Uterus (tissue), 4 donors: ENCODE measurements at regions of chr4 and their contacts with region 1.

Region 1: GRCh38 chr4:32624943-32625603 is 1904.9 kb downstream of the PCDH7 start:
- DNase-seq: no peak
- H3K4me3 ChIP-seq: no peak overlapping the region
- H3K27ac ChIP-seq: no peak overlapping the region
- H3K4me1 ChIP-seq: no peaks in the 10 kb centered on the region
- H3K27me3 ChIP-seq: no peaks in the 10 kb centered on the region
- CTCF ChIP-seq: no peak
- POLR2A ChIP-seq: no peak

Region 2: DNA sequence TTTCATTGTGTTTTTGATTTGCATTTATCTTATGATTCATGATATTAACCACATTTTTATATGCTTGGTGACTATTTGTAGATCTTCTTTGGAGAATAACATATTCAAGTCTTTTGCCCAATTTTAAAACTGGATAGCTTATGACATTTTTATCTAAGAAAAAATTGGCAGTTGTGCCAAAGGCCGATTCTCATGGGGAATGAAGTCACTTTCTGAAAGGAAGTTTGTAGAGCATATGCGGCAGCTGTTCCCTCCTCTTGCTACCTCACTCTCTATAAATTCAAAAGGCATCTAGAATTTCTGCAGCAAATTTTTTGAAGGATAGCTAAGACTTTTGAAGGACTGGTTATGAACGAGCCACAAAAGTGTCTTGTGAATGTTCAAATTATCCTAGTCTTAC is 1265.8 kb after region 1 on chr4:
- intact Hi-C with region 1: loop called (anchors 5 kb)
- DNase-seq: no peak
- H3K4me3 ChIP-seq: no peak overlapping the region
- H3K27ac ChIP-seq: no peak overlapping the region
- H3K4me1 ChIP-seq: no peaks in the 10 kb centered on the region
- H3K27me3 ChIP-seq: no peaks in the 10 kb centered on the region
- CTCF ChIP-seq: no peak
- POLR2A ChIP-seq: no peak